CD8-positive, alpha-beta memory T cell (primary cell): ENCODE measurements at regions of chr13 and their contacts with region 1.

Region 1: GRCh38 chr13:99501184-99501847 is at the start of gene TM9SF2:
- DNase-seq: peak; percentile 97 to 98 (median 97)
- H3K4me3 ChIP-seq: peak within 1 kb of the TSS; percentile 75
- H3K4me3 Mint-ChIP-seq: peak within 1 kb of the TSS; percentile 89 to 100 (median 98)
- H3K27ac ChIP-seq: peak within 1 kb of the TSS; percentile 94
- H3K27ac Mint-ChIP-seq: peak within 1 kb of the TSS; percentile 90 to 99 (median 98)
- H3K4me1 ChIP-seq: peaks cover 78% of the 10 kb centered on the region
- H3K4me1 Mint-ChIP-seq: peaks cover 71 to 92% (median 91%) of the 10 kb centered on the region in 3 donors
- H3K27me3 ChIP-seq: no peaks in the 10 kb centered on the region
- H3K27me3 Mint-ChIP-seq: peaks cover 0 to 5% of the 10 kb centered on the region in 2 donors
- total RNA-seq, gene TM9SF2: 88.0 to 96.0 TPM

Region 2: DNA sequence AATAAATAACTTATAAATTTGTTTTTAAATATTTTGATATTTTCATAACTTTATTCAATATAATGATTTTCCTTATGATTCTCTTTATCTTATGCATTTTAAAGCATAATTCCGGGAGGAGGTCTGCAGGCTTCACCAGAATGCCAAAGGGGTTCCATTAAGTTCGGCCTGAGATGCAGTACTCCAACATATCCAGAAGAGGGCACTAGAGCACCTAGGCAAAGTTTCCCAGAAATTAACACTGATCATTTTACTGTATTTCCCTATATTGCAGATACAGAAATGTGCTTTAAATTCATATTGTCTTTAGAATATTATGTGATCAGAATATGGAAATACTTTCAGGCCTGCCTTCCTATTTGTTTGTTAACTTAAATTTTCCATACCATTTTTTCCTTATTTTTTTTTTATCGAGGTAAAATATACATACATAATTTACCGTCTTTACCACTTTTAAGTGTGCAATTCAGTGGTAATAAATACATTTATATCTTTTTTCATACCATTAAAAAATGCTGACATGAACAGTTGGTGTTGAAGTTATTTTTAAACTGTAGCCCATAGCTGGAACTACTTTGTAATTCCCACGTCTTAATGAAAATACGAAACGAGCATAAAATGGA is 58.9 kb before region 1 on chr13:
- CTCF ChIA-PET with region 1: interaction called, 13 read pairs
- POLR2A ChIA-PET with region 1: interaction called, 3 read pairs
- DNase-seq: peak in 4 of 5 donors; percentile 47 to 75 (median 58)
- H3K4me3 ChIP-seq: no peak overlapping the region
- H3K4me3 Mint-ChIP-seq: no peak overlapping the region
- H3K27ac ChIP-seq: no peak overlapping the region
- H3K27ac Mint-ChIP-seq: no peak overlapping the region
- H3K4me1 ChIP-seq: no peaks in the 10 kb centered on the region
- H3K4me1 Mint-ChIP-seq: peaks cover 6% of the 10 kb centered on the region in 3 donors
- H3K27me3 ChIP-seq: no peaks in the 10 kb centered on the region
- H3K27me3 Mint-ChIP-seq: no peaks in the 10 kb centered on the region

Region 3: DNA sequence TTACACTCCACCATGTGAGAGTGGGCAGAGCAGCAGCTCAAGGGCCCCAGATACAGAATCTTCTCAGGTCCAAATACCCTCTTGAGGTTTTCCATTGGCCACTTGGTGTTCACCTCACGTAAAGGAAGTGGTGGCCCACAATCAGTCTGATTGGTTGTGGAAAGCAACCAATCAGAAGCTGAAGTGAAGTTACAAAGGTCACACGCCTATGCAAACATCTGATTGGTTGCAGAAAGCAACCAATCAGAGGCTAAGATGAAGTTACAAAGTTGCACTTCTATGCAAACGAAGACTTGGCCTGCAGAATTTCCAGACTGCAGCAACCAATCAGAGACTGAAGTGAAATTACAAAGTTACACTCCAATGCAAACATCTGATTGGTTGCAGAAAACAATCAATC is 14.3 kb before region 1 on chr13:
- CTCF ChIA-PET with region 1: interaction called, 10 read pairs
- POLR2A ChIA-PET with region 1: no interaction called
- DNase-seq: no peak
- H3K4me3 ChIP-seq: no peak overlapping the region
- H3K4me3 Mint-ChIP-seq: no peak overlapping the region
- H3K27ac ChIP-seq: no peak overlapping the region
- H3K27ac Mint-ChIP-seq: no peak overlapping the region
- H3K4me1 ChIP-seq: peaks cover 8% of the 10 kb centered on the region
- H3K4me1 Mint-ChIP-seq: peaks cover 17 to 36% (median 28%) of the 10 kb centered on the region in 3 donors
- H3K27me3 ChIP-seq: no peaks in the 10 kb centered on the region
- H3K27me3 Mint-ChIP-seq: no peaks in the 10 kb centered on the region